Mammary epithelial cell (primary cell): ENCODE measurements at regions of chr2 and their contacts with region 1.

Region 1: GRCh38 chr2:198127627-198128026 is 323.2 kb downstream of the PLCL1 start:
- DNase-seq: peak; percentile 25
- H3K4me3 ChIP-seq: no peak overlapping the region
- H3K27ac ChIP-seq: no peak overlapping the region
- H3K4me1 ChIP-seq: no peaks in the 10 kb centered on the region
- H3K27me3 ChIP-seq: peaks cover 3% of the 10 kb centered on the region
- CTCF ChIP-seq: peak; percentile 53 to 79

Region 2: DNA sequence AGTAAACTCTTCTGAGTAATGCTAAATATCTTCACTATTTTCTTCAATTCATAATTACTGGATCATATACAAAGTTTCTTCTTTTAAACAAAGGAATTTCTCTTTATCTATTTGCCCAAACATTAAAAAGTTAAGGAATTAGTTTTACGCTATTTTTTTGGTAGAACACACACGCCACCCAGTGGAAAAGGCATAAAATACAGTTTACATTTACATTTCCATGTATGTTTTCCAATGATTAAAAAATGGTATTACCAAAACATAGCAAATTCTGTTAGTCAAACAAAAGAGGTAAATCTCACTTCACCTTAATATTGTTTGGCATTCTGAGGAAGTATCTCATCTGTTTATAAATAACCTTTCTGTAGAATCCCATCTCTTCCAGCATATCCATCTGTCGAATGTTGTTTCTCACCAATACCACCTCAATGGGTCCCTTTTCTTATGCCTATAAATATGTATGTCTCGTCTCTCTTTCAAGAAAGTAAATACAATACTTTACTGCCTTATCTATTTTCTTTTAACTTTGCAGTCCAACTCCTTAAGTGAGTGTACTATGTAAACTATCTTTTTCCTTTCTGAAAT is 349.7 kb before region 1 on chr2:
- CTCF ChIA-PET with region 1: interaction called, 14 read pairs
- dilution Hi-C with region 1: no loop called
- in situ Hi-C with region 1: no loop called
- intact Hi-C with region 1: no loop called
- DNase-seq: peak; percentile 4
- H3K4me3 ChIP-seq: no peak overlapping the region
- H3K27ac ChIP-seq: no peak overlapping the region
- H3K4me1 ChIP-seq: no peaks in the 10 kb centered on the region
- H3K27me3 ChIP-seq: no peaks in the 10 kb centered on the region
- CTCF ChIP-seq: peak; percentile 60 to 64

Region 3: GRCh38 chr2:197804049-197804757 is 323.4 kb before region 1 on chr2 and contains the start of gene PLCL1:
- CTCF ChIA-PET with region 1: no interaction called
- dilution Hi-C with region 1: no loop called
- in situ Hi-C with region 1: loop called in 1 of 2 experiments (anchors 10 kb)
- intact Hi-C with region 1: loop called (anchors 1 kb)
- DNase-seq: peak; percentile 84
- H3K4me3 ChIP-seq: peak within 1 kb of the TSS; percentile 55 to 58 (median 58)
- H3K27ac ChIP-seq: no peak within 1 kb of the TSS
- H3K4me1 ChIP-seq: peaks cover 4% of the 10 kb centered on the region
- H3K27me3 ChIP-seq: peaks cover 16% of the 10 kb centered on the region
- CTCF ChIP-seq: no peak
- total RNA-seq, gene PLCL1: 0.33 TPM in 1 of 2 donors, not detected in the other

Region 4: GRCh38 chr2:197813093-197813787 is 314.4 kb before region 1 on chr2:
- CTCF ChIA-PET with region 1: no interaction called
- dilution Hi-C with region 1: no loop called
- in situ Hi-C with region 1: loop called (anchors 10 kb)
- intact Hi-C with region 1: no loop called
- DNase-seq: peak; percentile 41
- H3K4me3 ChIP-seq: no peak overlapping the region
- H3K27ac ChIP-seq: no peak overlapping the region
- H3K4me1 ChIP-seq: no peaks in the 10 kb centered on the region
- H3K27me3 ChIP-seq: no peaks in the 10 kb centered on the region
- CTCF ChIP-seq: peak; percentile 64 to 70

Region 5: DNA sequence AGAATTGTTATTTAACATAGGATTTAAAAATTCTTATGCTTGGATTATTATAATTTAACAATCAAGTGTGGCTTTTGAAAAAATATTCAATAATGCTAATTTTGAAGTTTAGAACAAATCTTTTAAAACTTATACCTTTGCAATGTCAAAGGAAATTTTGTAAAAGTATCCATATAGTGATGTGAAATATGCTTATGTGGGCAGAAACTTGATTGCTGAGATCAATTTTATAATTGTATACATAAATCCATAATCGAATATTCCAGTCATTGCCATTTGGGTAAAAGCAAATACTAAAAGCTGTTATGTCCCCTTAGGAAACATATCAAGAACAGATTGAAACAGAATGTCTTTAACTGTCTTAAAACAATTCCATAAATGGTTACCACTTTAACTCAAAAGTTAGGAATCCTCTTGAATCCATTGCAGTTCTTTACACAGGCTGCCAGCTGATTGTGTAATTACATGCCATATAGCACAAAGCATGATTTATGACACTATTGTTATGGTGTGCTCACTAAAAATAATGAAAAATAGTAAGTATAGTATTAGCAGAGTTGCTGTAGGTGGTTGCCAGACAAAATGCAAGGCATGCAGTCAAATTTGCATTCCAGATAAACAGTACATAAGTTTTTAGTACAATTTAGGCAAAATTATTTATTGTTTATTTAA is 299.0 kb before region 1 on chr2:
- CTCF ChIA-PET with region 1: no interaction called
- dilution Hi-C with region 1: no loop called
- in situ Hi-C with region 1: no loop called
- intact Hi-C with region 1: no loop called
- DNase-seq: no peak
- H3K4me3 ChIP-seq: no peak overlapping the region
- H3K27ac ChIP-seq: no peak overlapping the region
- H3K4me1 ChIP-seq: no peaks in the 10 kb centered on the region
- H3K27me3 ChIP-seq: no peaks in the 10 kb centered on the region
- CTCF ChIP-seq: no peak

Region 6: GRCh38 chr2:197851451-197851850 is 276.2 kb before region 1 on chr2:
- CTCF ChIA-PET with region 1: no interaction called
- dilution Hi-C with region 1: no loop called
- in situ Hi-C with region 1: no loop called
- intact Hi-C with region 1: loop called (anchors 5 kb)
- DNase-seq: no peak
- H3K4me3 ChIP-seq: no peak overlapping the region
- H3K27ac ChIP-seq: no peak overlapping the region
- H3K4me1 ChIP-seq: peaks cover 12% of the 10 kb centered on the region
- H3K27me3 ChIP-seq: no peaks in the 10 kb centered on the region
- CTCF ChIP-seq: no peak

Region 7: GRCh38 chr2:197893403-197894177 is 234.0 kb before region 1 on chr2:
- CTCF ChIA-PET with region 1: no interaction called
- dilution Hi-C with region 1: no loop called
- in situ Hi-C with region 1: no loop called
- intact Hi-C with region 1: no loop called
- DNase-seq: no peak
- H3K4me3 ChIP-seq: no peak overlapping the region
- H3K27ac ChIP-seq: no peak overlapping the region
- H3K4me1 ChIP-seq: peaks cover 5% of the 10 kb centered on the region
- H3K27me3 ChIP-seq: no peaks in the 10 kb centered on the region
- CTCF ChIP-seq: no peak

Region 8: GRCh38 chr2:198220763-198221610 is 93.4 kb after region 1 on chr2:
- CTCF ChIA-PET with region 1: no interaction called
- dilution Hi-C with region 1: no loop called
- in situ Hi-C with region 1: no loop called
- intact Hi-C with region 1: no loop called
- DNase-seq: no peak
- H3K4me3 ChIP-seq: no peak overlapping the region
- H3K27ac ChIP-seq: no peak overlapping the region
- H3K4me1 ChIP-seq: no peaks in the 10 kb centered on the region
- H3K27me3 ChIP-seq: no peaks in the 10 kb centered on the region
- CTCF ChIP-seq: no peak

Region 9: DNA sequence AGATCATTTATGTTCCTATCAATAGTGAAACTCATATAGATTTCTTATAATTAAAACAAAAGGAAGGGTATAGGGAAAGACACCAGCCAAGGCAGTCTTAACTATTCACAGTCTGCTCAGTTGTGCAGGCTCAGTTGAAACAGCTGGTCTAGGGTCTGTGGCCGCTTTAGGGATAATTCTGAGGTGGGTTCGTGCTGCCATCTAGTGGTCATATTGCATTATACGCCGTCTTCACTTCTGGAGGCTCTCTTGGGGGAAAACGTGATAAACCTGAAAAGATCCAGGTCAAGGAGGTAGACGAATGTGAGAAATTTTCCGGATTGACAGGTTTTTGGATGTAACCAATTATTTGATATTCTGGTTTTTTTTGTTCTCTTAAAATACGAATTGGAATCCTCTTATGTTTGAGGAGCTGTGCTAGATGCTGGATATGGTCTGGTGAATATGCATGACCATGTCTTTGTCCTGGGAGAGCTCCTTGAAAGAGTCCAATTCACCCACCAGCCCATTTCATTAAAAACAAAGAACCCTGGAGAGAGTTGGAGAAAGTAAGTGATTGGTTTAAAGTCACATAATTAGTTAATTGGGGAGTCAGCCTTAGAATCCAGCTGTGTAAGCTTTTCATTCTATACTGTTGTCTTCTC is 169.2 kb after region 1 on chr2:
- CTCF ChIA-PET with region 1: no interaction called
- dilution Hi-C with region 1: no loop called
- in situ Hi-C with region 1: no loop called
- intact Hi-C with region 1: loop called (anchors 2 kb)
- DNase-seq: peak; percentile 26
- H3K4me3 ChIP-seq: no peak overlapping the region
- H3K27ac ChIP-seq: no peak overlapping the region
- H3K4me1 ChIP-seq: no peaks in the 10 kb centered on the region
- H3K27me3 ChIP-seq: peaks cover 2% of the 10 kb centered on the region
- CTCF ChIP-seq: peak; percentile 62 to 71

Region 10: DNA sequence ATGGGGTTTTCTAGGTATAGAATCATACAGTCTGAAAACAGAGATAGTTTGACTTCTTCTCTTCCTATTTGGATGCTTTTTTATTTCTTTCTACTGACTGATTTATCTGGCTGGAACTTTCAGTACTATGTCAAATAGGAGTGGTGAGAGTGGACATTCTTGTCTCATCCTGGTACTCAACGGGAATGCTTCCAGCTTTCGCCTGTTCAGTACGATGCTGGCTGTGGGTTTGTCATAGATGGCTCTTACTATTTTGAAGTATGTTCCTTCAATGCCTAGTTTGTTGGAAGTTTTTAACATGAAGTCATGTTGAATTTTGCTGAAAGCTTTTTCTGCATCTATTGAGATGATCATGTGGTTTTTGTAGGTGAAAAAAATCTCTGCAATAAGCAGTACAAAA is 407.1 kb after region 1 on chr2:
- CTCF ChIA-PET with region 1: no interaction called
- dilution Hi-C with region 1: no loop called
- in situ Hi-C with region 1: no loop called
- intact Hi-C with region 1: no loop called
- DNase-seq: no peak
- H3K4me3 ChIP-seq: no peak overlapping the region
- H3K27ac ChIP-seq: no peak overlapping the region
- H3K4me1 ChIP-seq: no peaks in the 10 kb centered on the region
- H3K27me3 ChIP-seq: no peaks in the 10 kb centered on the region
- CTCF ChIP-seq: no peak